Activated CD8-positive, alpha-beta T cell treated with anti-CD3 and anti-CD28 coated beads, Interleukin-2, amount 10 ng/mL, durations not matched to agents 7 days and 5 days (primary cell): ENCODE measurements at regions of chr1 and their contacts with region 1.

Region 1: DNA sequence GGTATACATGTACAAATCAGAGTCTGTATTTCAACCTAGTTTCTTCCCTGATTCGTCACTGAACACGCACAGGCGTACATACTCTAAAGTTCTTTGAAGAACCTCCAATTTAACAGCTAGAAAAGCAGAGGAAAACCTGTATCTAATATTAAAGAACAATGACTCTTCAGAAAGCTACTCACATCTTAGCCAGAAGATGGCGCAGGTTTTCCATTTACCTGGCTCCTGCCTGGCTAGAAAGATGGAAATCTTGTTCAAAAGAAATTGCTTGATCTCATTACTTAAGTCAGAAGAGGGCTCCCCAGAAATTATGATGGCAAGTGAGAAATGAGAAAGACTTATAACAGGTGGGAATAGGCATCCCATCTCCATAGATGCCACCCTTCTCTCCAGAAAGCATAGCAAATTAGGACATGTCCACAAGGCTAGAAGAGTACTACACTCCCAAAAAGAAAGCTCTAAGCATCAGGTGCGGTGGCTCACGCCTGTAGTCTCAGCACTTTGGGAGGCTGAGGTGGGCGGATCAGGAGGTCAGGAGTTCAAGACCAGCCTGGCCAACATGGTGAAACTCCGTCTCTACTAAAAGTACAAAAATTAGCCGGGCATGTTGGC is 19.0 kb upstream of the L1TD1 start:
- DNase-seq: peak; percentile 58
- ATAC-seq: no peak
- H3K4me3 Mint-ChIP-seq: no peak overlapping the region
- H3K27ac Mint-ChIP-seq: no peak overlapping the region
- H3K4me1 Mint-ChIP-seq: no peaks in the 10 kb centered on the region
- H3K27me3 Mint-ChIP-seq: no peaks in the 10 kb centered on the region

Region 2: GRCh38 chr1:62407405-62408009 is 231.8 kb after region 1 on chr1:
- CTCF ChIA-PET with region 1: interaction called, 39 read pairs
- POLR2A ChIA-PET with region 1: no interaction called
- DNase-seq: peak; percentile 42
- ATAC-seq: no peak
- H3K4me3 Mint-ChIP-seq: no peak overlapping the region
- H3K27ac Mint-ChIP-seq: no peak overlapping the region
- H3K4me1 Mint-ChIP-seq: no peaks in the 10 kb centered on the region
- H3K27me3 Mint-ChIP-seq: peaks cover 2% of the 10 kb centered on the region